ENCODE measurements at regions of chr3 and their contacts with region 1.

Region 1: GRCh38 chr3:11846281-11847034 is at the start of gene TAMM41:
- DNase-seq: peak; percentile 86
- H3K4me3 Mint-ChIP-seq: peak within 1 kb of the TSS; percentile 96
- H3K27ac Mint-ChIP-seq: peak within 1 kb of the TSS; percentile 93
- H3K4me1 Mint-ChIP-seq: peaks cover 26% of the 10 kb centered on the region
- H3K27me3 Mint-ChIP-seq: no peaks in the 10 kb centered on the region
- total RNA-seq, gene TAMM41: 35.2 and 38.0 TPM in 2 replicates

Region 2: GRCh38 chr3:11236595-11237461 is 609.6 kb before region 1 on chr3:
- intact Hi-C with region 1: loop called (anchors 1 kb)
- DNase-seq: peak; percentile 62
- H3K4me3 Mint-ChIP-seq: no peak overlapping the region
- H3K27ac Mint-ChIP-seq: no peak overlapping the region
- H3K4me1 Mint-ChIP-seq: peaks cover 27% of the 10 kb centered on the region
- H3K27me3 Mint-ChIP-seq: peaks cover 22% of the 10 kb centered on the region

Region 3: GRCh38 chr3:11719406-11720230 is 126.8 kb before region 1 on chr3:
- intact Hi-C with region 1: loop called (anchors 1 kb)
- DNase-seq: peak; percentile 34
- H3K4me3 Mint-ChIP-seq: peak overlapping the region; percentile 49
- H3K27ac Mint-ChIP-seq: no peak overlapping the region
- H3K4me1 Mint-ChIP-seq: peaks cover 22% of the 10 kb centered on the region
- H3K27me3 Mint-ChIP-seq: peaks cover 24% of the 10 kb centered on the region

Region 4: GRCh38 chr3:11820531-11821041 is 25.9 kb before region 1 on chr3:
- intact Hi-C with region 1: loop called (anchors 1 kb)
- DNase-seq: no peak
- H3K4me3 Mint-ChIP-seq: no peak overlapping the region
- H3K27ac Mint-ChIP-seq: peak overlapping the region; percentile 27
- H3K4me1 Mint-ChIP-seq: peaks cover 14% of the 10 kb centered on the region
- H3K27me3 Mint-ChIP-seq: no peaks in the 10 kb centered on the region

Region 5: GRCh38 chr3:12193485-12194165 is 347.2 kb after region 1 on chr3:
- intact Hi-C with region 1: loop called (anchors 5 kb)
- DNase-seq: no peak
- H3K4me3 Mint-ChIP-seq: peak overlapping the region; percentile 52
- H3K27ac Mint-ChIP-seq: peak overlapping the region; percentile 93
- H3K4me1 Mint-ChIP-seq: peaks cover 77% of the 10 kb centered on the region
- H3K27me3 Mint-ChIP-seq: no peaks in the 10 kb centered on the region